PC-9 (cell line): ENCODE measurements at regions of chr16 and their contacts with region 1.

Region 1: DNA sequence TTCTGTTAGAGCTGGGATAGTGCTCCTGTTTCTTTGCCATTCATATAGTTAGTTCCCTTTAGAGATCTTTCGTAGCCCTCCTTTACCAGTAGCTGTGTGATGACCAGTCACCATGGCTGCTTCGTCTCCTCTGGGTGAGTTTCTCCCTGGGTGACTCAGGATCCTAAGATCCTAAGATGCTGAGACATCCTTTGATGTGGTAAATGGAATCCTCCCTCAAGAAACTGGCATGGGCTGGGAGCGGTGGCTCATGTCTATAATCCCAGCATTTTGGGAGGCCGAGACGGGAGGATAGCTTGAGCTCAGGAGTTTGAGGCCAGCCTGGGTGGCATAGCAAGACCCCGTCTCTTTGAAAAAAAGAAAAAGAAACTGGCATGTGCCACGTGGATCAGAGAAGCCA is 5.9 kb downstream of the PHAF1 start:
- DNase-seq: peak in 1 of 2 experiments; percentile 47
- H3K4me3 ChIP-seq: no peak overlapping the region
- H3K27ac ChIP-seq: no peak overlapping the region
- H3K4me1 ChIP-seq: peaks cover 35% of the 10 kb centered on the region
- H3K27me3 ChIP-seq: no peaks in the 10 kb centered on the region
- CTCF ChIP-seq: no peak

Region 2: DNA sequence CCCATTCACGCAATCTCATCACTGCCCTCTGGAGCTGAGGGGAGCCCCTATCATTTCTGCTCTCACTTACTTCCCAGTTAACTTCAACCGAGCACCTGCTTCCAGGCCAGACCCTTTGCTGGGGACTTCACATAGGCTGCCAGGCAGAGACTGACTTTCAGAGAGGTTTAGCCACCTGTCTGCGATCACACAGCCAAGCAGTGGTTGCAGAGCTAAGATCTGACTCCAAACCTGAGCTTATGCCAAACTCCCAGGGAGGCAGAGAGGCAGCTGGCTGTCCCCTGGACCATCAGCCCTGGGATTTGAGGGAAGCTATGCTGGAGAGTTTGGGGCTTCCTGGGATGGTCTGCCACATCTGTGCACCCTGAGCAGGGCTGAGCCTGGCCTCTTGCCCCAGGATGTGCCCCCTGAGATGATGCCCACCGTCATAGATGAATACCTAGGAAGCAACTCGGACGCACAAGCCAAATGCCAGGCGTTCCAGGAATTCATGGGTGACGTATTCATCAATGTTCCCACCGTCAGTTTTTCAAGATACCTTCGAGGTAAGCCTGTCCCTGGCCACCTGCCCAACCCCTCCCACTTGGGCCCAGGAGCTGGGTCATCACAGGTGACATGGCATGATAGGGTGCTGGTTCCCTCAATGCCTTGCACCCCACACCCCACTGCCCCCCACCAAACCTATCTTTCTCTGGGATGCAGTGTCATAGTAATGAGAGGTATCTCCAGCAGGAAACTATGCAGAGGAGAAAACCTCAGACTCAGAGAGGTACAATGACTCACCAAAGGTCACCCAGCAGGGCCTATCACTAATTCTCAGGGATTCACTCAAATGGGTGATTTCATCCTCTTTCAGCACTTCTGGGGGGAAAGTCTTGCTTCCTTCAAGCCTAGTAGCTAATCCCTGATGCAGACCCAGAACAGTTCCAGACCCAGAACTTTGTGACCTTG is 144.6 kb before region 1 on chr16:
- CTCF ChIA-PET with region 1: no interaction called
- POLR2A ChIA-PET with region 1: interaction called, 16 read pairs
- intact Hi-C with region 1: no loop called
- DNase-seq: peak; percentile 63 to 67
- H3K4me3 ChIP-seq: no peak overlapping the region
- H3K27ac ChIP-seq: no peak overlapping the region
- H3K4me1 ChIP-seq: peaks cover 17% of the 10 kb centered on the region
- H3K27me3 ChIP-seq: no peaks in the 10 kb centered on the region
- CTCF ChIP-seq: no peak

Region 3: GRCh38 chr16:67183627-67184328 is 68.1 kb after region 1 on chr16 and contains the start of gene MATCAP1:
- CTCF ChIA-PET with region 1: no interaction called
- POLR2A ChIA-PET with region 1: no interaction called
- intact Hi-C with region 1: loop called (anchors 2 kb)
- DNase-seq: peak; percentile 93 to 97
- H3K4me3 ChIP-seq: peak within 1 kb of the TSS; percentile 67
- H3K27ac ChIP-seq: peak within 1 kb of the TSS; percentile 66
- H3K4me1 ChIP-seq: peaks cover 46% of the 10 kb centered on the region
- H3K27me3 ChIP-seq: no peaks in the 10 kb centered on the region
- CTCF ChIP-seq: no peak
- total RNA-seq, gene MATCAP1: 21.7 and 24.6 TPM in 2 replicates

Region 4: GRCh38 chr16:67892899-67893742 is 777.5 kb after region 1 on chr16 and contains the start of gene PSKH1:
- CTCF ChIA-PET with region 1: interaction called, 13 read pairs
- POLR2A ChIA-PET with region 1: no interaction called
- intact Hi-C with region 1: no loop called
- DNase-seq: peak; percentile 88 to 91
- H3K4me3 ChIP-seq: peak within 1 kb of the TSS; percentile 98
- H3K27ac ChIP-seq: peak within 1 kb of the TSS; percentile 31
- H3K4me1 ChIP-seq: peaks cover 14% of the 10 kb centered on the region
- H3K27me3 ChIP-seq: no peaks in the 10 kb centered on the region
- CTCF ChIP-seq: no peak
- total RNA-seq, gene PSKH1: 25.8 and 28.4 TPM in 2 replicates